Activated CD4-positive, alpha-beta memory T cell treated with anti-CD3 and anti-CD28 coated beads for 36 hours (primary cell): ENCODE measurements at regions of chr6 and their contacts with region 1.

Region 1: GRCh38 chr6:37272834-37273566 is 15.1 kb upstream of the TMEM217 start:
- DNase-seq: peak; percentile 31
- H3K4me3 Mint-ChIP-seq: peak overlapping the region; percentile 36
- H3K27ac Mint-ChIP-seq: peak overlapping the region; percentile 70
- H3K4me1 Mint-ChIP-seq: peaks cover 45% of the 10 kb centered on the region
- H3K27me3 Mint-ChIP-seq: no peaks in the 10 kb centered on the region

Region 2: DNA sequence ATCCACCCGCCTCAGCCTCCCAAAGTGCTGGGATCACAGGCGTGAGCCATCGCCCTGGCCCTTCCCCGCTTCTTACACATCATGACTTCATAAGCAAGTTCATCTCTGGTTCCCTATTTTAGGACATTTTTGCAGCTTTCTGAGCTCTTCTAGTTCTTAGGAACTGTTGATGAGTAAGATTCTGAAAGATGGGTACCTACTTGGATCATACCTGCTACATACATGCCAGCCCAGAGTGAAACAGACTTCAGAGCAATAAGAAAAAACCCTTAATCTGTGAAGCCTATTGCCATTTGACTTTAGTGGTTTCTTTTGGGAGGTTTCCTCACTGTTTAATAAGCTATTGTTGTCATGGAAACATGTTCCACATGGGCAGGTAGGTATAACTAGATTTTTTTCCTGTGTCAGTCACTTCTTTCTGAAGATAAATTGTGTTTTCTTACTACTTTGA is 12.9 kb after region 1 on chr6:
- CTCF ChIA-PET with region 1: no interaction called
- POLR2A ChIA-PET with region 1: no interaction called
- intact Hi-C with region 1: loop called (anchors 2 kb)
- DNase-seq: peak; percentile 61
- H3K4me3 Mint-ChIP-seq: no peak overlapping the region
- H3K27ac Mint-ChIP-seq: peak overlapping the region; percentile 72
- H3K4me1 Mint-ChIP-seq: peaks cover 43% of the 10 kb centered on the region
- H3K27me3 Mint-ChIP-seq: no peaks in the 10 kb centered on the region